GM12878 (cell line): ENCODE measurements at regions of chr15 and their contacts with region 1.

Region 1: DNA sequence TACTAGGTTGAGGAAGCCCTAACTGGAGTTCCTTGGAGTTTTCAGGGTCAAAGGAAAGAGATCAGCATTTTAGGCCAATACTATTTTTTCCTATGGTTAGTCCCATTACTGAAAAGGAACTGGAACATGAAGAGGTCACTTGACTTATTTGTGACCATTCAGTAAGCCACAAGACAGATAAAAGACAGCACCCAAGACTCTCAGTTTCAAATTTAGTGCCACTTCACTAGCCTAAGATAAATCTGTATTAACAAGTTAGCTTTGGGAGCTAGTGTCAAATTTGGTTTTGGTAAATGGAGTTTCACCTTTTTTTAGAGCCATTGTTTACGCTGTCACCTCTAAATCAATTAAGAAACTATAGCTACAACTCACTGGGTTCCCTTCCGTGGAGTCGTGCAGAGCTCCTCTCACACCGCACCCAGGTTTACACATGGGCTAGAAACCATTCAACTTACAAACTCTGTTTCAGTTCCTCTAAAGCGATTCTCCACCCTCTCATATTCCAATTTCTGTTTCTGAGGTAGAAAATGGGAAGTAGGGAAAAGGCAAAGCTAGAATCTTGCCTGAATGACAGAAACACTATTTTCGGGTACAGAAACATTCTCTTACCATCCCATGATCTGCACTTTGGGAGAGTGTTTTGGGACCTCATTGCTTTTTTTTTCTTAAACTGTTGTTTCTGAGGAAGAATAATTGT is 14.4 kb downstream of the CCDC32 start:
- DNase-seq: peak; percentile 94
- ATAC-seq: peak; percentile 89
- H3K4me3 ChIP-seq: peak overlapping the region; percentile 17; the same call in 1 of the 2 replicates
- H3K27ac ChIP-seq: peak overlapping the region; percentile 89
- H3K4me1 ChIP-seq: peaks cover 78% of the 10 kb centered on the region
- H3K27me3 ChIP-seq: no peaks in the 10 kb centered on the region
- CTCF ChIP-seq: no peak
- EP300 ChIP-seq: peak; percentile 93 to 95
- POLR2A ChIP-seq: no peak
- RAD21 ChIP-seq: no peak

Region 2: DNA sequence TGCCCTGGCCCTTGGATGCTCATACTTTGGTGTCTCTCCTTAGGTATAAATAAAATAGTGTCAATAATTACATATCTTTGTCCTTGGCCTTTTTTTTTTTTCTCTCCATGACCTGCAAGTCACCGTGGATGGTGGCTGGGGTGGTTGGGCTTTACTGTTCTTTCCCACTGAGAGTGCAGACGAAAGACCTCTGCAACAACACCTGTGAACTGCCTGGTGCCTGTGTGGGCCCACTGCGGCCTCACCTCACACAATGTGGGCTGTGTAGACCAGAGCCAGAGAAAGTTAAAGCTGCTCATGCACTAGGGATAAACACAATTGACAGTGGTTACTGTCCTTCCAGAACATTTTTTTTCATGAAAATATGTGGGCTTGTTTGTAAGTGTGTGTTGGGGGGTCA is 24.6 kb before region 1 on chr15:
- CTCF ChIA-PET with region 1: interaction called, 7 read pairs
- POLR2A ChIA-PET with region 1: interaction called, 7 read pairs
- RAD21 ChIA-PET with region 1: interaction called, 10 read pairs
- SMC1A ChIA-PET with region 1: interaction called, 4 read pairs
- in situ Hi-C with region 1: no loop called
- intact Hi-C with region 1: no loop called
- DNase-seq: no peak
- ATAC-seq: no peak
- H3K4me3 ChIP-seq: no peak overlapping the region
- H3K27ac ChIP-seq: no peak overlapping the region
- H3K4me1 ChIP-seq: peaks cover 6% of the 10 kb centered on the region
- H3K27me3 ChIP-seq: no peaks in the 10 kb centered on the region
- CTCF ChIP-seq: no peak
- EP300 ChIP-seq: no peak
- POLR2A ChIP-seq: no peak
- RAD21 ChIP-seq: no peak